AG04449 (cell line): ENCODE measurements at regions of chr15 and their contacts with region 1.

Region 1: DNA sequence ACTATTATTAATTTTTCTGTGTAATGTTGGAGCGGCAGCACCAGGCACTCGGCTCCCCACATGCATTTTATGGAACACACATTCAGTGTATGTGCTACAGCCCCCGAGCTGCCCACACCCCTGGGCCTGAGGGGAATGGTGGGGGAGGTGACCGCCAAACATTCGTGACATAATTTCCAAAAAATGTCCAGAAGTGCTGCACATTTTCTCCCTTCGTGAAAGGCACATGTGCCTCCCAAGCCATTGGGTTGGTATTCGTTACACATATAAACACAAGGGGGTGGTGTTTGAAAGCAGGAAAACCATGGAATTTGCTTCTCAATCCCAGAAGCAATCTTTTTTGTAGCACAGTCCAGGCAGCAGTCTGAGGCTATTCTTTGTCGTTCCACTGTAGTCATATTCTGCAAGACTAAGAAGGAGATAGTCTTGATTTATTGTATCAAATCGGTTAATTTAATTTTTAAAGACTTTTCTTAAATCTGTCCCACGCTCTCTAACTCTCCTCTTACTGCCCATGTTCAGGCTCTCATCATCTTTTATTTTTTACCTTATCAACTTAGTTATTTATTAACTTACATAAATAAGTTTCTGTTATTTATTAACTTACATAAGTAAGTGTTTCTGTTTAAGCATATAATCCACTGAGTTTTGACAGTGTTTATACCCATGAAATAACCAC is 39.2 kb upstream of the POLR2M start:
- DNase-seq: peak; percentile 21
- H3K4me3 ChIP-seq: no peak overlapping the region
- CTCF ChIP-seq: peak; percentile 51

Region 2: GRCh38 chr15:57654153-57654852 is 13.0 kb before region 1 on chr15:
- CTCF ChIA-PET with region 1: interaction called, 19 read pairs
- POLR2A ChIA-PET with region 1: no interaction called
- DNase-seq: peak; percentile 16
- H3K4me3 ChIP-seq: no peak overlapping the region
- CTCF ChIP-seq: no peak

Region 3: DNA sequence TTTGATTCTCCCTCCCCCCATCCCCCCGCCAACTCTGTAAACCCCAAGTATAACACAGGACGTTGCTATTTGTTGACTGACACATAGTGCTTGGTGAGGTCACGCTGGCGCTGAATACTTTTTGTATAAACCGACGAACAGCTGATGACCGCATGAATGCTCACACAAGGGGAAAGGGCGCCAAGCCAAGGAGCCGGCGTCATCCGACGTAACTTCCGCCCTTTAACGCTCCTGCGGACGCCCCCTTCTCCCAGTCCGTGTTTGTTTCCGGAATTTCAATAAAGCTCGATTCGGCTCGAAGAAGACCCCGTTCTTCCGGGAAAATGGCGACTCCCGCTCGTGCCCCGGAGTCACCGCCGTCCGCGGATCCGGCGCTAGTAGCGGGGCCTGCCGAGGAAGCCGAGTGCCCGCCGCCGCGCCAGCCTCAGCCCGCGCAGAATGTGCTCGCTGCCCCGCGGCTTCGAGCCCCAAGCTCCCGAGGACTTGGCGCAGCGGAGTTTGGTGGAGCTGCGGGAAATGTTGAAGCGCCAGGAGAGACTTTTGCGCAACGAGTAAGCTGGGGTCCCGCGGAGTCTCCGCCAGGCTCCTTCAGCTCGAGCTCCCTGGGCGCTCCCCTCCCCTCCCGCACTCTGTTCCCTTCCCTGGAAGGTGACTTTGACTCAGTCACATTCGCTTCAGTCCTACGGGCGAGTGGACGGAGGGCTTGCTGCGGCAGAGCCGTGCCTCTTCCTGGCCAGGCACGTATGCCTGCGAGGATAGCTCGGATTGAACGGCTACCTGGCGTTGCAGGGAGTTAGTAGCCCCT is 39.3 kb after region 1 on chr15 and contains the start of gene POLR2M:
- CTCF ChIA-PET with region 1: interaction called, 14 read pairs
- POLR2A ChIA-PET with region 1: interaction called, 5 read pairs
- DNase-seq: peak; percentile 91
- H3K4me3 ChIP-seq: peak within 1 kb of the TSS; percentile 93
- CTCF ChIP-seq: no peak

Region 4: DNA sequence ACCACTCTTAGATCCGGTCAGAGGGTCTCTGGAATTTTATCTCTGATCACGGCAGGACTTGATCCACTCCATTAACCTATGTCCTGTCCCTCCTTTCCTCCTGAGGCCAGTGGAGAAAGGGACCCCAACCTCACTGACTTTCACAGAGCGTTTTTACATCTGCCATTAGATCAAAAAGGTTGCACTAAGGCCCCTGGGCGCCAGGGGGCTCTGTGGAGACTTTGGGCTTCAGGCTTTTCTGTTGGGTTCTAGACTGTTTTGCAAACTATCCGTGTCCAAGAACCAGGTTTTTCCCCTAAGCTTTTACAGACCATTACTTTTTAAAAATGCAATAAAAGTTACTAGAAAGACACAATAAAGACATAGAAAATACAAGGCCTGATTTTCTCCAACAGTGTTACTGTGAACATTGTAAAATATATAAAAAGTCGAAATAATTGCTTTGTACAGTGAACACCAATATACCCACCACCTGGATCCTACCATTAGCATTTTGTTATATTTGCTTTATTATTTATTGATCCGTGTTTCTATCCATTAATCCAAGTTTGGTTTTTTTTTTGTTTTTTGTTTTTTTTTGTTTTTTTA is 198.9 kb after region 1 on chr15:
- CTCF ChIA-PET with region 1: interaction called, 112 read pairs
- POLR2A ChIA-PET with region 1: no interaction called
- DNase-seq: no peak
- H3K4me3 ChIP-seq: no peak overlapping the region
- CTCF ChIP-seq: peak; percentile 69